GM12878 (cell line): ENCODE measurements at regions of chr15 and their contacts with region 1.

Region 1: DNA sequence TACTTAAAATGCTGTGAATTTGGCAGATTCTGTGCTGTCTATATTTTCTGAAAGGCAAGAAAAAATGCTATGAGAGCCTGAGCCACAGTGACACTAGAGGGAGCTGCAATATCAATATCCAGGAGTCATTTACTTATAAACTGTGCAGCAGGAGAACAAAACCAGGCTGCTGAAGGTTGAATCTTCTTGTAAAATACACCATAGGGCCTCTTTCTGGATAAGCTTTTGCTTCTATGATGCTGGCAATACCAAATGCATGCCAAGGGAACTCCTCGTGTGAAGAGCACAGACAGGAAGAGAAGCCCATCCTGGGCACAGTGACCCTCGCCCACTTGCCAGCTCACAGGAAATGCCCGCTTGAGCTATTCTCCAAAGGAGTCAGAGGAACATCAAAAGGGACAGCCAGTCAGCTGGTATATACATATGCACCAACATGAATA is 48.0 kb upstream of the TSPAN3 start:
- DNase-seq: peak; percentile 32
- ATAC-seq: peak; percentile 81
- H3K4me3 ChIP-seq: no peak overlapping the region
- H3K27ac ChIP-seq: no peak overlapping the region
- H3K4me1 ChIP-seq: peaks cover 12% of the 10 kb centered on the region; the same call in 1 of the 2 replicates
- H3K27me3 ChIP-seq: no peaks in the 10 kb centered on the region
- CTCF ChIP-seq: peak; percentile 65 to 76 (median 71)
- EP300 ChIP-seq: no peak
- POLR2A ChIP-seq: no peak
- RAD21 ChIP-seq: peak; percentile 86

Region 2: GRCh38 chr15:76941636-76942035 is 177.3 kb before region 1 on chr15:
- CTCF ChIA-PET with region 1: interaction called, 12 read pairs
- POLR2A ChIA-PET with region 1: no interaction called
- RAD21 ChIA-PET with region 1: no interaction called
- SMC1A ChIA-PET with region 1: no interaction called
- in situ Hi-C with region 1: no loop called
- intact Hi-C with region 1: no loop called
- DNase-seq: no peak
- ATAC-seq: no peak
- H3K4me3 ChIP-seq: no peak overlapping the region
- H3K27ac ChIP-seq: no peak overlapping the region
- H3K4me1 ChIP-seq: peaks cover 2% of the 10 kb centered on the region; the same call in 1 of the 2 replicates
- H3K27me3 ChIP-seq: no peaks in the 10 kb centered on the region
- CTCF ChIP-seq: no peak
- EP300 ChIP-seq: no peak
- POLR2A ChIP-seq: no peak
- RAD21 ChIP-seq: no peak

Region 3: DNA sequence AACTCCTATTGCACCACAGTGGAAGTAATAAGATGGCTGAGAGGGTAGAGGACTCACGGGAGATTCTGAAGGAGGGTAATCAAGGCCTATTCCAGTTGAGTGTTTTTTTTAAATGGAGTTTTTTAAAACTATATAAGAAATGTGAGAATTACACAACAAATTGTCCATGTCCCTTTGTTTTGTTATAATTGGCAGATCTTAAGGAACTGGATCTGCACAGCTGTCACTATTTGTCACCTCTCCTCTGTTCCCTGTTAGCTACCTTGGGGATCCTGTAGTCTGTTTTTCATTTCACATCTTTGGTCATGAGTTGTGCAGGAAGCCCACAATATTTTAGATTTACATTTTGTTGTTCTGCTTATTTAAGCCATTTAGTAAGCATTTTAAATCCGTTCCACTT is 29.3 kb after region 1 on chr15:
- CTCF ChIA-PET with region 1: interaction called, 6 read pairs
- POLR2A ChIA-PET with region 1: no interaction called
- RAD21 ChIA-PET with region 1: no interaction called
- SMC1A ChIA-PET with region 1: interaction called, 13 read pairs
- in situ Hi-C with region 1: no loop called
- intact Hi-C with region 1: no loop called
- DNase-seq: no peak
- ATAC-seq: no peak
- H3K4me3 ChIP-seq: no peak overlapping the region
- H3K27ac ChIP-seq: no peak overlapping the region
- H3K4me1 ChIP-seq: no peaks in the 10 kb centered on the region
- H3K27me3 ChIP-seq: no peaks in the 10 kb centered on the region
- CTCF ChIP-seq: no peak
- EP300 ChIP-seq: no peak
- POLR2A ChIP-seq: no peak
- RAD21 ChIP-seq: no peak

Region 4: DNA sequence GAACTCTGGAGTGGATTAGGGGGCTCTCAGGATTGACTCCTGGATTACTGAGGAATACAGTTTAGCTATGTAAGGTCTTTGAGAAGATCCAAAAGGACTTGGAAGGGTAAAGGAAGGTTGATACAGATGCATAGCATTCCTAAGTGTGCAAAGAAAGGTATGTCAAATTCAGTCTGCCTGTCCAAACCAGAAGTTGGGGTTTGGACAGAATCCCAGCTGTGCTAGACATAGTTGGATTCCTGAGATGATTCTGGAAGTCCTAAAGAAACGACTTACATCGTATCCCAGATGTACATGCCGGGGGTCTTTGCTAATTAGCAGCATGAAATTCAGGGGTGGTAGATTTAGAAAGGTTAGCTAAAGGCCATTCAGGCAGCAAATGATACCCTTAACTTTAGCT is 49.7 kb after region 1 on chr15:
- CTCF ChIA-PET with region 1: interaction called, 11 read pairs
- POLR2A ChIA-PET with region 1: no interaction called
- RAD21 ChIA-PET with region 1: interaction called, 3 read pairs
- SMC1A ChIA-PET with region 1: interaction called, 6 read pairs
- in situ Hi-C with region 1: no loop called
- intact Hi-C with region 1: no loop called
- DNase-seq: no peak
- ATAC-seq: no peak
- H3K4me3 ChIP-seq: no peak overlapping the region
- H3K27ac ChIP-seq: no peak overlapping the region
- H3K4me1 ChIP-seq: no peaks in the 10 kb centered on the region
- H3K27me3 ChIP-seq: no peaks in the 10 kb centered on the region
- CTCF ChIP-seq: no peak
- EP300 ChIP-seq: no peak
- POLR2A ChIP-seq: no peak
- RAD21 ChIP-seq: no peak

Region 5: DNA sequence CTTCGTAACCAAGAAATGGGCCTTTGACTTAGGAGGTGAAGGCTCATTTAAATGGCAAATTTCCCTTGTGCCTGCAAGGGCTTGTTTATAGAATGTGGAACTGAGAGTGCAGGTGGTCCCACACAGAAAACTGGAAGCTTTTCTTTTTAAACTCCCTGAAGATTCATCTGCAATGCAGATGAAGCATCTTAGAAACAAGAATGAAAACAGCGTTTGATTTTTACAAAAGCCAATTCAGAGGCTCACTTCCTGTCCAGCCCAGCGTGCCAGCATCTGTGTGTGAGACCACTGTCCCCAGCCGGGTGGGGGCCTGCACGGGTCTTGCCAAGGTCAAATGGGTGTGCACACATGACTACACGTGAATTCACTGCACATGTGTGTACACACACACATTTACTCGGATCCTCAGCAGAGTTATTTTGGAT is 419.1 kb after region 1 on chr15:
- CTCF ChIA-PET with region 1: interaction called, 155 read pairs
- POLR2A ChIA-PET with region 1: no interaction called
- RAD21 ChIA-PET with region 1: interaction called, 87 read pairs
- SMC1A ChIA-PET with region 1: interaction called, 102 read pairs
- in situ Hi-C with region 1: loop called (anchors 5 kb)
- intact Hi-C with region 1: loop called (anchors 1 kb)
- DNase-seq: peak; percentile 72
- ATAC-seq: peak; percentile 82
- H3K4me3 ChIP-seq: peak overlapping the region; percentile 28; the same call in 1 of the 2 replicates
- H3K27ac ChIP-seq: peak overlapping the region; percentile 91
- H3K4me1 ChIP-seq: peaks cover 40% of the 10 kb centered on the region
- H3K27me3 ChIP-seq: no peaks in the 10 kb centered on the region
- CTCF ChIP-seq: no peak
- EP300 ChIP-seq: peak; percentile 53 to 56; a peak in 2 of 4 replicates
- POLR2A ChIP-seq: no peak
- RAD21 ChIP-seq: no peak